ENCODE measurements at regions of chr7 and their contacts with region 1.

Region 1: DNA sequence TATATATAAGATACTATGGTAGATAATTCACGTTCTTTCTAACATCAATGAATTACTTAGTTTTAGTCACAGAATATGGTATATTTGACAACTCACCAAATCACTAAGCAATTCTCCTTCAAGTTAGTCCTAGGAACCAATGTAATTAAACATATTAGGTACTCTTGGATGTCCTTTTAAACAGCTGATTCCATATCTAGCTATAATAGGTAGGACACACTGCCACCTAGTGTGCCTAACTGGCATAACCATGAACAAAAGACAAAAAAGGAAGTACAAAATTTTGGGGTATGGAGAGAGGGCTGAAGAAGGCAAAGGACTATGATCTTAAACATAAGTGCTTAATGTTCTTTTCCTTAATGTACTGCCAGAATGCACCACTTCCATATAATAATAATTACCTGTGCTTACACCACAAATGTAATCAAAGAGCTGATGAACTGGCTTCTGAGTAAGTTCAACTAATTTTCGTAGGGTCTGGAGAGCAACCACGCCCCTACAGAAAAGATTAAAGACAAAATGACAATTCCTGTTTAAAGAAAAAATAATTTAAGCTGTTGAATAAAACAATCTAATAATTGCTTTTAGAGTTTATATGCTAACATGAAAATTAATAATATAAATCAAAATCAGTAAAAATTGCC is 28.7 kb downstream of the PNPLA8 start:
- DNase-seq: peak; percentile 66
- H3K4me3 ChIP-seq: no peak overlapping the region; a peak in 1 of 4 replicates
- H3K27ac ChIP-seq: no peak overlapping the region
- H3K4me1 ChIP-seq: no peaks in the 10 kb centered on the region
- H3K27me3 ChIP-seq: no peaks in the 10 kb centered on the region
- CTCF ChIP-seq: peak; percentile 99
- EP300 ChIP-seq: no peak
- RAD21 ChIP-seq: peak; percentile 96

Region 2: DNA sequence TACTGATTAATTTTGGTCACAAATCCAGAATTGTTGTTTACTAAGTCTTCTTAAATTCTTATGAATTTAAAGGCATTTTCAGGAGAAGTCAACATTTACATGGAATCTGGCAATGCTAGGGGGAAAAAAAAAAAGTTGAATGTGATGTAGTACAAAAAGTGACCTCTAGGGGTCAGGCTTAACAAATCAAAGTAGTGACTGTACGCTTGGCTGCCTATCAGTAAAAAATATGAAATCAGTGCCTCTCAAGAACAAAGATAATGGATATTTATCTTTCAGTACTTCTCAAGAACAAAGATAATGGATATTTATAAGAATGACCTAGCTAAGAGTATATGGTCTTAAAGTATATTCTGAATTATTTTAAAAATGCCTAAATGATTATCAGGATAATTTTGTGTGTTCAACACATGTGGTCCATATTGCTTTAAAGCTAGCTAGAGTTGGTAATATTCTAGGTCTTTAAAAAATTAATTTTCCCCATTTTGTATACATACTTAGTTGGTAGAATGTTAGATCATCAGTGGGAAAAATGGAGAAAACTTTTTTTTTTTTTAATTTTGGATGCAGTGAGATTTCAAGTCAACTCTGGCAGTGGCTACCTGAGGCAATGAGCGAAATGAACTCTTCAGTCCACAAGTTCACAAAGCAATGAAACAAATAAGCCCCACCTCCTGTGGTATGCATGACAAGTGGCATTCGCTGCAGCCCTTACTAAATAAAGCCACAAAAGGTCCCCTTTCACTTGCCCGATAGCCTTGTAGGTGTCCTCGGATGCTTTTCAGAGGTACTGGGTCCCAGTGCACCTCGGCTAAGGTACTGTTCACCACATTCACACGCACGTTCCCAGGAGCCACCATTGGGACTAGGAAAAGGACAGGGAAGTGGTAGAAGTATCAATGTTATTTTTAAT is 315.9 kb before region 1 on chr7:
- CTCF ChIA-PET with region 1: interaction called, 49 read pairs
- POLR2A ChIA-PET with region 1: no interaction called
- DNase-seq: peak; percentile 57
- H3K4me3 ChIP-seq: no peak overlapping the region
- H3K27ac ChIP-seq: peak overlapping the region in 1 of 2 experiments; percentile 60; a peak in 1 of 4 replicates
- H3K4me1 ChIP-seq: peaks cover 0 to 9% of the 10 kb centered on the region in 2 experiments; a peak in 2 of 4 replicates
- H3K27me3 ChIP-seq: no peaks in the 10 kb centered on the region
- CTCF ChIP-seq: peak; percentile 96
- EP300 ChIP-seq: 0 out of 4 replicates have a peak, but pooled peaks of 1 of the 2 experiments have one; percentile 13
- RAD21 ChIP-seq: peak; percentile 96

Region 3: DNA sequence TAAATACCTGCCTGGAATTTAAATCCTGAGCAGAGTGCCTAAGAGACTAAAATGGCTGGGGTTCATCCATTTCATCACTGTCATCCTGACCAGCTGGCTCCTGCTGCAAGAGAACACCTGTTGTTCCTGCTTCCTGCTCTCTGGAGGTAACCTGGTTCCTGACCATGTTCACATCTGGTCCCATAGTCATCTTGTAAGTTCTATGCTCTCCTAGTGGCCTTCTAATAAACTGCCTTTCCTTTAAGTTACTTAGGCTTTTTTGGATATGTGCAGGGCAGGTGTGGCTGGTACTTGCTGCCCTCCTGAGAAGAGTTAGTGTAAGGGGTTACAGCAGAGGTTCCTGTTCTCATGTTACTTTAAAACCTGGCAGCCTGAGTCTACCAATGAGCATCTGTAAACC is 121.0 kb before region 1 on chr7:
- CTCF ChIA-PET with region 1: no interaction called
- POLR2A ChIA-PET with region 1: no interaction called
- DNase-seq: no peak
- H3K4me3 ChIP-seq: no peak overlapping the region
- H3K27ac ChIP-seq: no peak overlapping the region
- H3K4me1 ChIP-seq: no peaks in the 10 kb centered on the region
- H3K27me3 ChIP-seq: no peaks in the 10 kb centered on the region
- CTCF ChIP-seq: no peak
- EP300 ChIP-seq: no peak
- RAD21 ChIP-seq: no peak

Region 4: DNA sequence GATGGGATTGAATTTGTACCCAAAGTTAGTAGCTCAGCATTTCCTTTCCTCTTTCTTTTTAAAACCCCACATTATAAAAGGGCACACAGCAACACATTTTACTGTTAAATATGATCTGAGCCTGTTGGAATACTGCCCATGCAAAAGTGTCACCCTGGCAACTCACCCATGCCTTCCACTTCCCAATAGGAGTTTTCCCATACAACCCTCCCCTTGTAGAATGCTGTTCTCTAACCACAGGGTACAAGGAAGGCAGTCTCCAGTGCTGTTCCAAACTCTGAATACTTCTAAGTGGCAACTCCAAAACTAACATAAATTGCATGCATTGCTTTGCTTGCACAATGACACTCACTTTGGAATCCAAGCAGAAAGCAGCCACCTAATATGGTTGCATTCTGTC is 101.8 kb before region 1 on chr7:
- CTCF ChIA-PET with region 1: no interaction called
- POLR2A ChIA-PET with region 1: no interaction called
- DNase-seq: no peak
- H3K4me3 ChIP-seq: no peak overlapping the region
- H3K27ac ChIP-seq: no peak overlapping the region
- H3K4me1 ChIP-seq: no peaks in the 10 kb centered on the region; a peak in 1 of 4 replicates
- H3K27me3 ChIP-seq: no peaks in the 10 kb centered on the region
- CTCF ChIP-seq: no peak
- EP300 ChIP-seq: no peak
- RAD21 ChIP-seq: no peak

Region 5: GRCh38 chr7:108452722-108453121 is 44.5 kb before region 1 on chr7:
- CTCF ChIA-PET with region 1: interaction called, 53 read pairs
- POLR2A ChIA-PET with region 1: interaction called, 3 read pairs
- DNase-seq: peak; percentile 61
- H3K4me3 ChIP-seq: no peak overlapping the region
- H3K27ac ChIP-seq: no peak overlapping the region; a peak in 1 of 4 replicates
- H3K4me1 ChIP-seq: peaks cover 0 to 10% of the 10 kb centered on the region in 2 experiments; a peak in 2 of 4 replicates
- H3K27me3 ChIP-seq: peaks cover 44% of the 10 kb centered on the region
- CTCF ChIP-seq: peak; percentile 67
- EP300 ChIP-seq: no peak
- RAD21 ChIP-seq: peak; percentile 71

Region 6: GRCh38 chr7:108468246-108468645 is 29.0 kb before region 1 on chr7:
- CTCF ChIA-PET with region 1: interaction called, 33 read pairs
- POLR2A ChIA-PET with region 1: no interaction called
- DNase-seq: no peak
- H3K4me3 ChIP-seq: no peak overlapping the region
- H3K27ac ChIP-seq: no peak overlapping the region
- H3K4me1 ChIP-seq: no peaks in the 10 kb centered on the region
- H3K27me3 ChIP-seq: no peaks in the 10 kb centered on the region
- CTCF ChIP-seq: no peak
- EP300 ChIP-seq: no peak
- RAD21 ChIP-seq: no peak

Region 7: DNA sequence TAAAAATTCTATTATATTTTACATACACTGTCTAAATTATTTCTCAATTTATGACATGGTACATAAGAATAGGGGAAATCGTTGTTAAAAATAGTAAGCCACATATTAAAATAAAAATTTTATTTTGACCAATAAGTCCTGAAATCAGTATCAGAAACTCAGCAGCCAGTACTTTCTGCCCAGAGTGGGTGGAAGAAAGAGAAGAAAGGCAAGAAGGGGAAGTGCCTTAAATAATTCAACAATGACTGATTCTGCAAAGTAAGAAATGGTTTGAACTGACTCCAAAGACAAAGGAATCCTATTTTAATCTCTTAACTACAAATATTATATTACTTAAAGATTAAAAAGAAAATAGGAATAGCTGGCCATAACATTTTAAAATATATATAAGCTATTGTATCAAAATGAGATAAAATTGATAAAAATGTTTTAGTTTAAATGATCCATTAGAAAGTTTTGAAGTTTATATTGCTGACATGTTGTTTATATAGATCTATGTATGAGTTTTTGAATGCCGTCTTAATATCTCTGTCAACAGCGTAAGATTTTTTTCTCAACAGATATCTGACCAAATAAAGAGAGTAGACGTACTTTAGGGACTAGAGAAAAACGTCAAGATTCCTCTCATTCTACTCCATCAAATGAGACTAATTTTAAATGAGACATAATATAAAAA is 10.8 kb before region 1 on chr7:
- CTCF ChIA-PET with region 1: interaction called, 33 read pairs
- POLR2A ChIA-PET with region 1: no interaction called
- DNase-seq: no peak
- H3K4me3 ChIP-seq: no peak overlapping the region
- H3K27ac ChIP-seq: no peak overlapping the region
- H3K4me1 ChIP-seq: peaks cover 0 to 5% of the 10 kb centered on the region in 2 experiments; a peak in 1 of 4 replicates
- H3K27me3 ChIP-seq: no peaks in the 10 kb centered on the region
- CTCF ChIP-seq: no peak
- EP300 ChIP-seq: no peak
- RAD21 ChIP-seq: no peak

Region 8: DNA sequence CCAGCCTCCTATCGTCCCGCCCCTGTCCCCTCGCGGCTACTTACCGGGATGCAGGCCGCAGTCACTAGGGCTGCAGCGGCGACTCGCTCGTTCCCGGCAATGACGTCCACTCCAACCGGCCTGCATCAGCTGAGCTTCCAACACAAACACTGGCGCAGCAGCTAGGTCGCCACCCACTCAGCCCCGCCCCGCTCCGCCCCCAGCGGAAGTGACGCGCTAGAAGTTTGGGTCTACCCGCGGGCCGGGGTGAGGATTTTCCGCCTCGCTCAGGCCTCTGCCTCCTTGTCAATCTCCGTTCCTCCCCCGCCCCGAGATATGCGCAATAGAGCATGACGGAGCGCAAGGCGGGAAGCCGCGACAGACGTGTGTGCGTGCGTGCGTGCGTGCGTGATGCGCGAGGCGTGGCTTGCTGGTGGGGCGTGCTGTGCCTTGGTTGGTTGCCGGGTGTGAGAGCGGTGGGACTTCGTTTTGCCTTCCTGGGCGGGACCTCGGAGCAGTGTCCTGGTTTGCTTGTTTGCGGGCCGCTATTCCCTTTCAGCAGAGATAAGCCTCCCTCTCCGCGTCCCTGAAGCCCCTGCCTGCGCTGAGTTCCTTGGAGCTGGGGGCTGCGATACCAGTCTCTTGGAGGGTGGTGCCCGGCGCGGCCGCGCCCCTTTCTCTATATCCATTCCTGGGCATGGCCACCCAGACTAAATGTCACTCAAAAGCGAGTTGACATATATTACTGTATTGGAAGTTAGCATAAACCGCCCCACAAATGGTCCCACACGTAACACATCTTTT is 29.0 kb after region 1 on chr7 and contains the start of gene PNPLA8:
- CTCF ChIA-PET with region 1: interaction called, 13 read pairs
- POLR2A ChIA-PET with region 1: interaction called, 3 read pairs
- DNase-seq: peak; percentile 97
- H3K4me3 ChIP-seq: peak within 1 kb of the TSS; percentile 83 to 89
- H3K27ac ChIP-seq: peak within 1 kb of the TSS; percentile 94
- H3K4me1 ChIP-seq: peaks cover 14 to 24% of the 10 kb centered on the region in 2 experiments; a peak in 3 of 4 replicates
- H3K27me3 ChIP-seq: no peaks in the 10 kb centered on the region
- CTCF ChIP-seq: no peak
- EP300 ChIP-seq: peak in 1 of 2 experiments; percentile 31; a peak in 1 of 4 replicates
- RAD21 ChIP-seq: 0 out of 2 replicates have a peak, but pooled peaks have one; percentile 13
- polyA plus RNA-seq, gene PNPLA8: 7.2 and 9.8 TPM in 2 replicates

Measured in SK-N-SH (cell line).